ENCODE measurements at regions of chr2 and their contacts with region 1.

Region 1: GRCh38 chr2:107687073-107687472 is 139.6 kb upstream of the RGPD4 start:
- DNase-seq: no peak
- ATAC-seq: no peak
- H3K4me3 ChIP-seq: no peak overlapping the region
- H3K27ac ChIP-seq: no peak overlapping the region
- H3K4me1 ChIP-seq: no peaks in the 10 kb centered on the region
- H3K27me3 ChIP-seq: no peaks in the 10 kb centered on the region; a peak in 1 of 5 replicates
- CTCF ChIP-seq: no peak
- EP300 ChIP-seq: no peak
- POLR2A ChIP-seq: no peak
- RAD21 ChIP-seq: no peak

Region 2: GRCh38 chr2:107303964-107304363 is 383.1 kb before region 1 on chr2:
- CTCF ChIA-PET with region 1: no interaction called
- POLR2A ChIA-PET with region 1: no interaction called
- in situ Hi-C with region 1: no loop called
- intact Hi-C with region 1: no loop called
- DNase-seq: no peak
- ATAC-seq: no peak
- H3K4me3 ChIP-seq: no peak overlapping the region
- H3K27ac ChIP-seq: no peak overlapping the region
- H3K4me1 ChIP-seq: no peaks in the 10 kb centered on the region
- H3K27me3 ChIP-seq: no peaks in the 10 kb centered on the region
- CTCF ChIP-seq: no peak
- EP300 ChIP-seq: no peak
- POLR2A ChIP-seq: no peak
- RAD21 ChIP-seq: no peak

Region 3: GRCh38 chr2:107323946-107324565 is 363.0 kb before region 1 on chr2:
- CTCF ChIA-PET with region 1: no interaction called
- POLR2A ChIA-PET with region 1: no interaction called
- in situ Hi-C with region 1: no loop called
- intact Hi-C with region 1: loop called (anchors 5 kb)
- DNase-seq: no peak
- ATAC-seq: no peak
- H3K4me3 ChIP-seq: no peak overlapping the region
- H3K27ac ChIP-seq: no peak overlapping the region
- H3K4me1 ChIP-seq: no peaks in the 10 kb centered on the region
- H3K27me3 ChIP-seq: no peaks in the 10 kb centered on the region
- CTCF ChIP-seq: no peak
- EP300 ChIP-seq: no peak
- POLR2A ChIP-seq: no peak
- RAD21 ChIP-seq: no peak

Measured in HepG2 (cell line).